GM12878 (cell line): ENCODE measurements at regions of chr9 and their contacts with region 1.

Region 1: DNA sequence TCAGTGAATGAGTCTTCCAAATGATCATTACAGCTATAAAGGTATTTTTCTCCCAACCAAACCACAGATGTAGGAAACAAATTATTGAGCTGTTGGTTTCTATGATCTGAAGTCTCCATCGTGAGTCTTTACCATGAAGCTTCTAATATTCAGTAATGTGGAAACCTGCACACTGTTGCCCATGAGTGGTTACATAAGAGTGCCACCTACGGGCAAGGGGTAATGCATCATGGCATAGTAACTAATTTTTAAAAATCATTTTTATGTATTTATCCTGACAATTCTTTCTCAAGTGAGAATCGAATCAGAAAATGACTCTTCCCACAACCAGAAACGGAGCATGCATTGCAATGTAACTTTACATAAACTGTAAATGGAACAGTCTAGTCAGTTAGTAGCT is 282.5 kb upstream of the SMARCA2 start:
- DNase-seq: no peak
- ATAC-seq: peak; percentile 84
- H3K4me3 ChIP-seq: no peak overlapping the region
- H3K27ac ChIP-seq: no peak overlapping the region
- H3K4me1 ChIP-seq: no peaks in the 10 kb centered on the region
- H3K27me3 ChIP-seq: no peaks in the 10 kb centered on the region
- CTCF ChIP-seq: peak; percentile 39 to 47 (median 43); a peak in 5 of 6 replicates
- EP300 ChIP-seq: no peak
- POLR2A ChIP-seq: no peak
- RAD21 ChIP-seq: peak; percentile 49

Region 2: GRCh38 chr9:1709345-1709744 is 23.3 kb before region 1 on chr9:
- CTCF ChIA-PET with region 1: interaction called, 11 read pairs
- POLR2A ChIA-PET with region 1: no interaction called
- RAD21 ChIA-PET with region 1: interaction called, 6 read pairs
- SMC1A ChIA-PET with region 1: interaction called, 6 read pairs
- in situ Hi-C with region 1: no loop called
- intact Hi-C with region 1: no loop called
- DNase-seq: no peak
- ATAC-seq: peak; percentile 64
- H3K4me3 ChIP-seq: no peak overlapping the region
- H3K27ac ChIP-seq: no peak overlapping the region
- H3K4me1 ChIP-seq: no peaks in the 10 kb centered on the region
- H3K27me3 ChIP-seq: no peaks in the 10 kb centered on the region
- CTCF ChIP-seq: peak; percentile 35 to 58 (median 55); a peak in 4 of 6 replicates
- EP300 ChIP-seq: no peak
- POLR2A ChIP-seq: no peak
- RAD21 ChIP-seq: peak; percentile 45

Region 3: DNA sequence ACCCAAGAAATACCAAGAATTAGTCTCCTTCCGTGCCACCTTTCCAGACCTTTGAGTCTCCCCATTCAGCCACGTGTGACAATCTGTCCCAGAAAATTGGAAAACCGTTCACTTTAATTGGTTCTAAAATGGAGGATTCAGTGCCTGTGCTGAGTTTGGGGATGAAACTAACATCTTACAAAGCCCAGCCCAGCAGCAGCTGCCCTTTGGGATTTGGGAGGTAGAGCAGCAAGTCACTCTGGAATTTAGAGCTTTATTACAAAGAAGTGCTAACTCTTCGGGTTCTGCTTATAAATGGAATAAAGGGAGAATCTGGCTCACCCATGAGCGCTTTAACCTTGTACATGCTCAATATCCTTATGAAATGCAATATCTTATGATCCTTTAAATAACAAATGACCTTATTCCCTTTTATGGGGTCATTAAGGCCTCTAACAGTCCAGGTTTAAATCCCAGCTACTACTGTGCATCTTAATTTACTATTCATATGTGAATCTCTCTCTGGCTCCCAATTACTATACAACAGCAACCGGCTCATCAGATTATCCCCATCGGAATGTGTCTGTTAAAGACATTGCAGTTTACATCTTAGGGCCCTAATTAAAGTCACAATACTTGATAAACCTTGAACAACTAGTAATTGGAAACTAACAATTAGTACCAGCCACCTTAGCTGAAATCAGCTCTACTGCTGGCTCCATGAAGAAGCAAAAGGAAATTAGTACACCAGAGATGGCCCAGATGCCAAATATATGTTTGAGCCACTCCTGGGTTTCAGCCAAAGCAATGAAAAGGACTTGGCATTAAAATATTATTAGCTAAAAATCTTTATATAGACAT is 10.7 kb after region 1 on chr9:
- CTCF ChIA-PET with region 1: interaction called, 13 read pairs
- POLR2A ChIA-PET with region 1: no interaction called
- RAD21 ChIA-PET with region 1: interaction called, 5 read pairs
- SMC1A ChIA-PET with region 1: interaction called, 7 read pairs
- in situ Hi-C with region 1: no loop called
- intact Hi-C with region 1: no loop called
- DNase-seq: no peak
- ATAC-seq: no peak
- H3K4me3 ChIP-seq: no peak overlapping the region
- H3K27ac ChIP-seq: no peak overlapping the region
- H3K4me1 ChIP-seq: no peaks in the 10 kb centered on the region; the same call in 1 of the 2 replicates
- H3K27me3 ChIP-seq: no peaks in the 10 kb centered on the region
- CTCF ChIP-seq: no peak
- EP300 ChIP-seq: no peak
- POLR2A ChIP-seq: no peak
- RAD21 ChIP-seq: no peak

Region 4: DNA sequence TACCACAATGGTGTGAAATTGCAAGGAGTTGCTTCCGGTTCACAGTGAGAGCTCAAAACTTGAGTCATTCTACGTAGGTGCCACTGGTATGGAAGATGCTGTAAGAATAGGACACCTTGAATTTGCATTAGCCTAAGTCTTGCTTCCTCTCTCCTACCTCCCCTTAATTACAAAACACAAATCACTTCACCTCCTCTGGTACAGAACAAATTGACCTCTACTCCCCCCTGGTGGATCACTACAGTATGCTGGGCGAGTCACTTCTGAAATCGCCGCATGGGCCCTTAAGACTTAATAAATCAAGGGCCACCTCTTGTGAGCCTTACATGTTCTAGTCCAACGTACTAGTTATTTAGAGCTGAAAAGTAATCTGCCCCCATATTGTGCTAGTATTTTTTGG is 137.2 kb after region 1 on chr9:
- CTCF ChIA-PET with region 1: interaction called, 16 read pairs
- POLR2A ChIA-PET with region 1: no interaction called
- RAD21 ChIA-PET with region 1: interaction called, 7 read pairs
- SMC1A ChIA-PET with region 1: interaction called, 11 read pairs
- in situ Hi-C with region 1: no loop called
- intact Hi-C with region 1: loop called (anchors 1 kb)
- DNase-seq: no peak
- ATAC-seq: peak; percentile 82
- H3K4me3 ChIP-seq: no peak overlapping the region
- H3K27ac ChIP-seq: 0 out of 2 replicates have a peak overlapping the region, but pooled peaks have one; percentile 14
- H3K4me1 ChIP-seq: peaks cover 28% of the 10 kb centered on the region
- H3K27me3 ChIP-seq: no peaks in the 10 kb centered on the region
- CTCF ChIP-seq: peak; percentile 53 to 72 (median 62)
- EP300 ChIP-seq: no peak
- POLR2A ChIP-seq: no peak
- RAD21 ChIP-seq: peak; percentile 91